ENCODE measurements at regions of chr12 and their contacts with region 1.

Region 1: GRCh38 chr12:71426300-71427047 is 13.1 kb upstream of the LGR5 start:
- DNase-seq: no peak
- ATAC-seq: no peak
- H3K4me3 ChIP-seq: no peak overlapping the region
- H3K27ac ChIP-seq: no peak overlapping the region
- H3K4me1 ChIP-seq: no peaks in the 10 kb centered on the region
- H3K27me3 ChIP-seq: peaks cover 0 to 24% (median 0%) of the 10 kb centered on the region in 9 donors
- CTCF ChIP-seq: no peak
- POLR2A ChIP-seq: no peak

Region 2: GRCh38 chr12:71524626-71525025 is 98.2 kb after region 1 on chr12:
- intact Hi-C with region 1: no loop called
- DNase-seq: no peak
- ATAC-seq: no peak
- H3K4me3 ChIP-seq: no peak overlapping the region
- H3K27ac ChIP-seq: no peak overlapping the region
- H3K4me1 ChIP-seq: no peaks in the 10 kb centered on the region
- H3K27me3 ChIP-seq: peaks cover 0 to 24% (median 0%) of the 10 kb centered on the region in 9 donors
- CTCF ChIP-seq: no peak
- POLR2A ChIP-seq: no peak

Region 3: GRCh38 chr12:71551529-71551928 is 125.1 kb after region 1 on chr12:
- intact Hi-C with region 1: loop called in 1 of 10 experiments (anchors 10 kb)
- DNase-seq: no peak
- ATAC-seq: no peak
- H3K4me3 ChIP-seq: no peak overlapping the region
- H3K27ac ChIP-seq: no peak overlapping the region
- H3K4me1 ChIP-seq: no peaks in the 10 kb centered on the region
- H3K27me3 ChIP-seq: no peaks in the 10 kb centered on the region
- CTCF ChIP-seq: peak in 4 of 12 donors; percentile 22 to 35 (median 32)
- POLR2A ChIP-seq: no peak

Region 4: DNA sequence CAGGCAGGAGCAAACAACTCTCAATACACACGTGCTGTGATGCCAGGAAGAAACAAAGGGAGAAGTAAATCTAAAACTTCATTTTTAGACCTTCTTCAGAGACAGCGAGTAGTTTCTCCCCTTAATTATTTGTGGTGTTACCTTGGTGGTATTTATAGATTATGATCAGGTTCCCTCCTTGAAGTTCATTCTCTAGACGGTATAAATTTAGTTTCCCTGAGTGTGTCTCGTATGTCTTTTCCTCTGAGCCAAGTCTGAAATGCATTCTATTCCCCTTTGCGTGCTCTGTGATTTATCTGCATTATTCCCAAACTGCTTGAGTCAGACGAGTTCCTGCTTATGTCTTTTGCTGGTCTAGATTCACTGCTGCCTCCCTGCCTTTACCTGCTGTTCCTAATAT is 910.9 kb after region 1 on chr12:
- intact Hi-C with region 1: no loop called
- DNase-seq: no peak
- ATAC-seq: no peak
- H3K4me3 ChIP-seq: no peak overlapping the region
- H3K27ac ChIP-seq: no peak overlapping the region
- H3K4me1 ChIP-seq: no peaks in the 10 kb centered on the region
- H3K27me3 ChIP-seq: no peaks in the 10 kb centered on the region
- CTCF ChIP-seq: no peak
- POLR2A ChIP-seq: no peak

Measured in heart left ventricle (tissue), 16 donors.